ENCODE measurements at regions of chr16 and their contacts with region 1.

Region 1: GRCh38 chr16:86761111-86762031 is 183.0 kb downstream of the FOXL1 start:
- DNase-seq: no peak
- H3K4me3 ChIP-seq: no peak overlapping the region
- H3K27ac ChIP-seq: no peak overlapping the region
- H3K4me1 ChIP-seq: peaks cover 0 to 6% (median 6%) of the 10 kb centered on the region in 3 donors
- H3K27me3 ChIP-seq: peaks cover 0 to 100% (median 0%) of the 10 kb centered on the region in 4 donors
- CTCF ChIP-seq: peak; percentile 52 to 78 (median 71)
- POLR2A ChIP-seq: no peak

Region 2: DNA sequence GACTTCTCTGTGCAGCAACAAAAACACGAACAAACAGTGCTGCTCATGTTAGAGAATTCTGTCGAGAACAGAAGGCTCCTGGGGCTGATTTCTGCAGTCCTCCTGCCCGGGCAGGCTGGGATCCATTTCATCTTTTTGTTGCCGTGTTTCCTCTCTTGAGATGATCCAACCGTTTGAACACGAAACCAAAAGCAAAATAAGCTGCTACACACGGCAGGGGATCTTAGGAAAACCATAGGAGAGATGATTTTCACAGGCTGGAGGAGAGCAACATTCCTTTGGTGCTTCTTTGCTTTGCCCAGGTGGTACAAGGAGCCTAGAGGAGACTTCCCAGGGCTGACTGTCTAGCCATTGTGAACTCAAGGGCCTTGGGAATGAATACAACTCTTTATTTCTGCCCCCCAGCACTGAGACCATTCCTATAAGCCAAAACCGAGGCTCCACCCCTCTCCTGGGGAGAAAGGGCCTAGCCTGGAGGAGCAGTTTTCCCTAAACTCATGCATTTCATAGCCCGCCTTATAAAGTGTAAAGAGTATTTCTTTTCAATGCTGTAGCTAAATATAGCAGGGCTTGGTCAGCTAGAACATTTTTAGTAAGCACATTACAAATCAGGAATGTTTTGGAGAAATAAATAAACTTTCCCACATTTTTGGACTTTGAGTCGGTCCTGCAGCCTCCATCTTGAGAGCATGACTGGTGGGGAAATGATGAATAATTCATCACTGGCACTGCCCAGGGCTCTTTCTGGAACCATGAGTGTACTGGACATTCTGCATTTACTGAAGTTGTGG is 175.4 kb before region 1 on chr16:
- intact Hi-C with region 1: loop called (anchors 10 kb)
- DNase-seq: no peak
- H3K4me3 ChIP-seq: no peak overlapping the region
- H3K27ac ChIP-seq: peak overlapping the region in 2 of 4 donors; percentile 18 to 60
- H3K4me1 ChIP-seq: no peaks in the 10 kb centered on the region
- H3K27me3 ChIP-seq: peaks cover 0 to 74% (median 0%) of the 10 kb centered on the region in 4 donors
- CTCF ChIP-seq: no peak
- POLR2A ChIP-seq: no peak

Region 3: DNA sequence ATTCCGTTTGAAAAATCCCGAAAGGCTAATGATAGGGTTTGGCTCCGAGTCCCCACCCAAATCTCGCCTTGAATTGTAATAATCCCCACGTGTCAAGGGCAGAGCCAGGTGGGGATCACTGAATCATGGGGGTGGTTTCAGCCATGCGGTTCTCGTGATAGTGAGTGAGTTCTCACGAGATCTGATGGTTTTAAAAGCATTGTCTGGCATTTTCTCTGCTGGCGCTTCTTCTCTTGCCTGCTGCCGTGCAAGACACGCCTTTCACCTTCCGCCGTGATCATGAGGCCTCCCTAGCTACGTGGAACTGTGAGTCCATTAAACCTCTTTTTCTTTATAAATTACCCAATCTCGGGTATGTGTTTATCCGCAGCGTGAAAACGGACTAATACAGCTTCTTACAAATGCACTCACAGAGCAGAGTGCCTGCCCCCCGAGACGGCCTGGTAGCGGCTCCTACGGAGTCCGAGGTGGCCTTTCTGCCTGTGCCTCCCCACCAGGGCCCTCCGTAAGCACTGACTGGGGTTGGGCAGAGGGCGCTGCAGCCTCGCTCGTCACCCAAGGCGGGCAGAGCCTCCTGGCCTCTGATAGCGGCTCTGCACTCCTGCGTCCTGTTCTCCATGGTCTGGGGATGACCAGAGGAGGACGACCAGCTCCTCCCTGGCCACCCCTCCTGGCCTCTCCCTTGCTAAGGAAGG is 51.3 kb before region 1 on chr16:
- intact Hi-C with region 1: no loop called
- DNase-seq: no peak
- H3K4me3 ChIP-seq: no peak overlapping the region
- H3K27ac ChIP-seq: no peak overlapping the region
- H3K4me1 ChIP-seq: no peaks in the 10 kb centered on the region
- H3K27me3 ChIP-seq: peaks cover 0 to 58% (median 0%) of the 10 kb centered on the region in 4 donors
- CTCF ChIP-seq: no peak
- POLR2A ChIP-seq: no peak

Region 4: GRCh38 chr16:87043231-87044031 is 282.1 kb after region 1 on chr16:
- intact Hi-C with region 1: no loop called
- DNase-seq: no peak
- H3K4me3 ChIP-seq: no peak overlapping the region
- H3K27ac ChIP-seq: no peak overlapping the region
- H3K4me1 ChIP-seq: peaks cover 0 to 10% (median 6%) of the 10 kb centered on the region in 3 donors
- H3K27me3 ChIP-seq: peaks cover 0 to 73% (median 0%) of the 10 kb centered on the region in 4 donors
- CTCF ChIP-seq: no peak
- POLR2A ChIP-seq: no peak

Measured in esophagus squamous epithelium (tissue), 5 donors.